HepG2 (cell line): ENCODE measurements at regions of chr6 and their contacts with region 1.

Region 1: GRCh38 chr6:130843575-130844320 is 16.5 kb downstream of the SMLR1 start:
- DNase-seq: peak; percentile 74
- ATAC-seq: peak; percentile 79
- H3K4me3 ChIP-seq: no peak overlapping the region
- H3K27ac ChIP-seq: no peak overlapping the region
- H3K4me1 ChIP-seq: peaks cover 23% of the 10 kb centered on the region
- H3K27me3 ChIP-seq: no peaks in the 10 kb centered on the region
- CTCF ChIP-seq: peak; percentile 91
- EP300 ChIP-seq: no peak
- POLR2A ChIP-seq: 0 out of 4 replicates have a peak, but pooled peaks of 1 of the 2 experiments have one; percentile 18
- RAD21 ChIP-seq: peak; percentile 89

Region 2: GRCh38 chr6:130322673-130323268 is 521.0 kb before region 1 on chr6:
- CTCF ChIA-PET with region 1: interaction called, 19 read pairs
- POLR2A ChIA-PET with region 1: no interaction called
- in situ Hi-C with region 1: loop called (anchors 5 kb)
- intact Hi-C with region 1: loop called (anchors 1 kb)
- DNase-seq: peak; percentile 55
- ATAC-seq: peak; percentile 77
- H3K4me3 ChIP-seq: no peak overlapping the region
- H3K27ac ChIP-seq: no peak overlapping the region
- H3K4me1 ChIP-seq: no peaks in the 10 kb centered on the region
- H3K27me3 ChIP-seq: no peaks in the 10 kb centered on the region
- CTCF ChIP-seq: peak; percentile 81
- EP300 ChIP-seq: no peak
- POLR2A ChIP-seq: no peak
- RAD21 ChIP-seq: peak; percentile 71

Region 3: DNA sequence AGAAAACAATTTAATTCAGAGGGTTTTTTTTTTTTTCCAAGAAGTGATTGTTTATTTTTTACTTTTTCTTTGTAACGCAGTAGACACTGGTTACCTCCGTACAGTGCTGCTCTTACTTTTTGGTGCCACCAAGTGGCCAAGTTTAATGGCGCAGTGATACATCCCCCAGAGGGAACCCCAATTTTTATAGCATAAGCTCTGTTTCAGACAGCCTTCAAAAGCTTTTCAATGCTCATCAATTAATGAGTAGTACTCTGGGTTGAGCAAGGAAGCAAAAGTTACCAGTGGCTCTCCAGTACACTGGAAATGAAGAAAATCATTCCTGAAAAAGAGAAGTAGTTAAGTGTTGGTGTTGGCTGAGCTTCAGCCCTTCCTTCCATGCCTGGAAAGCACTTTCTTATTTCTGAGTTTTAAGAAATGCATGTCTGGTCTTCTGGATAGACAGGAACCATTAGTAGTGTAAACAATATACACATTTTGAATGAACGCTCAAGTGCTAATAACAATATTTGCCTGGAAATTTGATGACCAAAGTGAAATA is 145.7 kb before region 1 on chr6:
- CTCF ChIA-PET with region 1: no interaction called
- POLR2A ChIA-PET with region 1: no interaction called
- in situ Hi-C with region 1: no loop called
- intact Hi-C with region 1: loop called (anchors 1 kb)
- DNase-seq: peak; percentile 30
- ATAC-seq: peak; percentile 99
- H3K4me3 ChIP-seq: no peak overlapping the region
- H3K27ac ChIP-seq: no peak overlapping the region
- H3K4me1 ChIP-seq: no peaks in the 10 kb centered on the region
- H3K27me3 ChIP-seq: peaks cover 0 to 8% of the 10 kb centered on the region in 2 experiments; a peak in 1 of 5 replicates
- CTCF ChIP-seq: peak; percentile 69
- EP300 ChIP-seq: no peak
- POLR2A ChIP-seq: no peak
- RAD21 ChIP-seq: peak; percentile 33; the same call in 1 of the 2 replicates

Region 4: GRCh38 chr6:130788954-130789353 is 54.8 kb before region 1 on chr6:
- CTCF ChIA-PET with region 1: interaction called, 6 read pairs
- POLR2A ChIA-PET with region 1: no interaction called
- in situ Hi-C with region 1: no loop called
- intact Hi-C with region 1: loop called (anchors 1 kb)
- DNase-seq: peak; percentile 44
- ATAC-seq: peak; percentile 75
- H3K4me3 ChIP-seq: no peak overlapping the region
- H3K27ac ChIP-seq: no peak overlapping the region
- H3K4me1 ChIP-seq: peaks cover 22% of the 10 kb centered on the region
- H3K27me3 ChIP-seq: no peaks in the 10 kb centered on the region
- CTCF ChIP-seq: peak; percentile 56
- EP300 ChIP-seq: no peak
- POLR2A ChIP-seq: no peak
- RAD21 ChIP-seq: no peak

Region 5: GRCh38 chr6:130872250-130873095 is 28.7 kb after region 1 on chr6:
- CTCF ChIA-PET with region 1: interaction called, 9 read pairs
- POLR2A ChIA-PET with region 1: interaction called, 3 read pairs
- in situ Hi-C with region 1: no loop called
- intact Hi-C with region 1: loop called (anchors 2 kb)
- DNase-seq: peak; percentile 62
- ATAC-seq: peak; percentile 86
- H3K4me3 ChIP-seq: no peak overlapping the region
- H3K27ac ChIP-seq: peak overlapping the region; percentile 0
- H3K4me1 ChIP-seq: peaks cover 10% of the 10 kb centered on the region; the same call in 1 of the 2 replicates
- H3K27me3 ChIP-seq: no peaks in the 10 kb centered on the region
- CTCF ChIP-seq: peak; percentile 94
- EP300 ChIP-seq: no peak
- POLR2A ChIP-seq: no peak
- RAD21 ChIP-seq: peak; percentile 77